CD8-positive, alpha-beta memory T cell (primary cell): ENCODE measurements at regions of chr5 and their contacts with region 1.

Region 1: GRCh38 chr5:73908395-73908794 is 282.4 kb downstream of the ARHGEF28 start:
- DNase-seq: no peak
- H3K4me3 ChIP-seq: no peak overlapping the region
- H3K4me3 Mint-ChIP-seq: no peak overlapping the region
- H3K27ac ChIP-seq: no peak overlapping the region
- H3K27ac Mint-ChIP-seq: no peak overlapping the region
- H3K4me1 ChIP-seq: no peaks in the 10 kb centered on the region
- H3K4me1 Mint-ChIP-seq: peaks cover 0 to 9% (median 0%) of the 10 kb centered on the region in 3 donors
- H3K27me3 ChIP-seq: no peaks in the 10 kb centered on the region
- H3K27me3 Mint-ChIP-seq: no peaks in the 10 kb centered on the region

Region 2: GRCh38 chr5:74042959-74043358 is 134.6 kb after region 1 on chr5:
- CTCF ChIA-PET with region 1: no interaction called
- POLR2A ChIA-PET with region 1: no interaction called
- DNase-seq: no peak
- H3K4me3 ChIP-seq: no peak overlapping the region
- H3K4me3 Mint-ChIP-seq: no peak overlapping the region
- H3K27ac ChIP-seq: no peak overlapping the region
- H3K27ac Mint-ChIP-seq: no peak overlapping the region
- H3K4me1 ChIP-seq: no peaks in the 10 kb centered on the region
- H3K4me1 Mint-ChIP-seq: no peaks in the 10 kb centered on the region
- H3K27me3 ChIP-seq: no peaks in the 10 kb centered on the region
- H3K27me3 Mint-ChIP-seq: peaks cover 6 to 11% of the 10 kb centered on the region in 2 donors

Region 3: DNA sequence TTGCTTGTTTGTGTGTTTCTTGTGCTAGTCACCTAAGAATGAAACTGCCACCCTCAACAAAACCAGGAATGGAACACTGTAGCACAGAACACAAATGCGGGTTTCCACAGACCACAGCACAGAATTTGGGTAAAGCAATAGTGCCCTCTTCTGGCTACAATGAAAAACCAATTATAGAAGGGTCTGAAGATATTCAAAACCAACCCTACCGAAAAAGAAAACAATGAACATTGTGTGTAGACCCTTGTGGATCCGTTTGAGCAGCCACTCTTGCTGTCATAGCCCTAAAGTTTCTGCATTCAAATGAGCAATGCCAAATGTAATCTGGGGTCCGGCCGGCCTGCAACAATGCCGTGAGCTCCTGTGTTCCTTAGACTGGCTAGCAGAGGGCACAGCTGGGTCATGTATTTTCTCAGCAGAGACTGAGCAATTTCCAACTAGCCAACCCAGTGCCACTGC is 740.5 kb after region 1 on chr5:
- CTCF ChIA-PET with region 1: interaction called, 34 read pairs
- POLR2A ChIA-PET with region 1: no interaction called
- DNase-seq: peak in 3 of 5 donors; percentile 45 to 57 (median 49)
- H3K4me3 ChIP-seq: no peak overlapping the region
- H3K4me3 Mint-ChIP-seq: no peak overlapping the region
- H3K27ac ChIP-seq: no peak overlapping the region
- H3K27ac Mint-ChIP-seq: no peak overlapping the region
- H3K4me1 ChIP-seq: no peaks in the 10 kb centered on the region
- H3K4me1 Mint-ChIP-seq: peaks cover 0 to 3% (median 0%) of the 10 kb centered on the region in 3 donors
- H3K27me3 ChIP-seq: no peaks in the 10 kb centered on the region
- H3K27me3 Mint-ChIP-seq: peaks cover 5 to 28% of the 10 kb centered on the region in 2 donors